ENCODE measurements at regions of chr10 and their contacts with region 1.

Region 1: GRCh38 chr10:84429926-84430520 is 101.6 kb downstream of the CCSER2 start:
- DNase-seq: peak; percentile 60 to 87
- H3K4me3 ChIP-seq: no peak overlapping the region
- H3K27ac ChIP-seq: no peak overlapping the region
- H3K4me1 ChIP-seq: no peaks in the 10 kb centered on the region
- H3K27me3 ChIP-seq: no peaks in the 10 kb centered on the region
- CTCF ChIP-seq: peak; percentile 66 to 93 (median 91)
- EP300 ChIP-seq: 0 out of 3 replicates have a peak, but pooled peaks of 1 of the 2 experiments have one; percentile 30
- POLR2A ChIP-seq: no peak
- RAD21 ChIP-seq: peak; percentile 82 to 86

Region 2: GRCh38 chr10:84415539-84416244 is 14.3 kb before region 1 on chr10:
- CTCF ChIA-PET with region 1: interaction called, 16 read pairs
- POLR2A ChIA-PET with region 1: interaction called, 4 read pairs
- DNase-seq: no peak
- H3K4me3 ChIP-seq: no peak overlapping the region
- H3K27ac ChIP-seq: no peak overlapping the region
- H3K4me1 ChIP-seq: no peaks in the 10 kb centered on the region
- H3K27me3 ChIP-seq: no peaks in the 10 kb centered on the region
- CTCF ChIP-seq: no peak
- EP300 ChIP-seq: no peak
- POLR2A ChIP-seq: no peak
- RAD21 ChIP-seq: no peak

Region 3: GRCh38 chr10:84440781-84441180 is 10.8 kb after region 1 on chr10:
- CTCF ChIA-PET with region 1: interaction called, 21 read pairs
- POLR2A ChIA-PET with region 1: no interaction called
- DNase-seq: no peak
- H3K4me3 ChIP-seq: no peak overlapping the region
- H3K27ac ChIP-seq: no peak overlapping the region
- H3K4me1 ChIP-seq: no peaks in the 10 kb centered on the region; a peak in 1 of 7 replicates
- H3K27me3 ChIP-seq: no peaks in the 10 kb centered on the region
- CTCF ChIP-seq: no peak
- EP300 ChIP-seq: no peak
- POLR2A ChIP-seq: no peak
- RAD21 ChIP-seq: no peak

Region 4: DNA sequence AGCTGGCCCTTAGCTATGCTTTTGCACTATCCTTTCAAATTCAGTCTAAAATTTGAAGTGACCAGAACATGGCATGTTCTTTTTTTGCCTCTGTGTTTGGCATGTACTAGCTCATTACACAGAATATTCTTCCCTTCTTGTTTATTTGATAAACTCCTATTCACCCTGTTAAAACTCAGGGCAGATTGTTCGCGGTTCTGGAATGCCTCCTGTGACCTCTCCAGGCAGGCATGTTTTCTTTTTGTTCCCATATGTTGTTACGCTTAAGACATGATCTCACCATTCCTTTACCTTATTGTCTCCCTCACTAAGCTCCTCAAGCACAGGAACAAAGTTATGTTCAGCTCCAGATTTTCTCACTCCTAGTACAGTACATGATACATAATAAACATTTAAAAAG is 80.1 kb after region 1 on chr10:
- CTCF ChIA-PET with region 1: interaction called, 17 read pairs
- POLR2A ChIA-PET with region 1: no interaction called
- DNase-seq: no peak
- H3K4me3 ChIP-seq: no peak overlapping the region
- H3K27ac ChIP-seq: no peak overlapping the region
- H3K4me1 ChIP-seq: peaks cover 0 to 3% (median 0%) of the 10 kb centered on the region in 4 experiments; a peak in 1 of 7 replicates
- H3K27me3 ChIP-seq: no peaks in the 10 kb centered on the region
- CTCF ChIP-seq: no peak
- EP300 ChIP-seq: no peak
- POLR2A ChIP-seq: no peak
- RAD21 ChIP-seq: no peak

Region 5: GRCh38 chr10:84523526-84523925 is 93.5 kb after region 1 on chr10:
- CTCF ChIA-PET with region 1: interaction called, 19 read pairs
- POLR2A ChIA-PET with region 1: no interaction called
- DNase-seq: no peak
- H3K4me3 ChIP-seq: no peak overlapping the region
- H3K27ac ChIP-seq: no peak overlapping the region
- H3K4me1 ChIP-seq: peaks cover 0 to 9% (median 4%) of the 10 kb centered on the region in 4 experiments; a peak in 3 of 7 replicates
- H3K27me3 ChIP-seq: no peaks in the 10 kb centered on the region
- CTCF ChIP-seq: no peak
- EP300 ChIP-seq: no peak
- POLR2A ChIP-seq: no peak
- RAD21 ChIP-seq: no peak

Region 6: GRCh38 chr10:84531396-84531795 is 101.4 kb after region 1 on chr10:
- CTCF ChIA-PET with region 1: interaction called, 70 read pairs
- POLR2A ChIA-PET with region 1: no interaction called
- DNase-seq: no peak
- H3K4me3 ChIP-seq: no peak overlapping the region
- H3K27ac ChIP-seq: no peak overlapping the region
- H3K4me1 ChIP-seq: peaks cover 0 to under 1% (median 0%) of the 10 kb centered on the region in 4 experiments; a peak in 1 of 7 replicates
- H3K27me3 ChIP-seq: no peaks in the 10 kb centered on the region
- CTCF ChIP-seq: no peak
- EP300 ChIP-seq: no peak
- POLR2A ChIP-seq: no peak
- RAD21 ChIP-seq: no peak